ENCODE measurements at regions of chr16 and their contacts with region 1.

Region 1: GRCh38 chr16:88700636-88701482 is 5.3 kb downstream of the RNF166 start:
- DNase-seq: peak; percentile 98
- H3K4me3 Mint-ChIP-seq: peak overlapping the region; percentile 95
- H3K27ac Mint-ChIP-seq: peak overlapping the region; percentile 98
- H3K4me1 Mint-ChIP-seq: peaks cover 63% of the 10 kb centered on the region
- H3K27me3 Mint-ChIP-seq: no peaks in the 10 kb centered on the region

Region 2: GRCh38 chr16:88619859-88620815 is 80.7 kb before region 1 on chr16:
- CTCF ChIA-PET with region 1: interaction called, 6 read pairs
- POLR2A ChIA-PET with region 1: interaction called, 17 read pairs
- DNase-seq: peak; percentile 86
- H3K4me3 Mint-ChIP-seq: peak overlapping the region; percentile 55
- H3K27ac Mint-ChIP-seq: peak overlapping the region; percentile 93
- H3K4me1 Mint-ChIP-seq: peaks cover 57% of the 10 kb centered on the region
- H3K27me3 Mint-ChIP-seq: no peaks in the 10 kb centered on the region

Region 3: GRCh38 chr16:88633684-88634140 is 67.1 kb before region 1 on chr16:
- CTCF ChIA-PET with region 1: no interaction called
- POLR2A ChIA-PET with region 1: interaction called, 19 read pairs
- DNase-seq: peak; percentile 71
- H3K4me3 Mint-ChIP-seq: peak overlapping the region; percentile 76
- H3K27ac Mint-ChIP-seq: peak overlapping the region; percentile 62
- H3K4me1 Mint-ChIP-seq: peaks cover 46% of the 10 kb centered on the region
- H3K27me3 Mint-ChIP-seq: peaks cover 20% of the 10 kb centered on the region

Region 4: GRCh38 chr16:88639231-88640038 is 61.4 kb before region 1 on chr16:
- CTCF ChIA-PET with region 1: no interaction called
- POLR2A ChIA-PET with region 1: interaction called, 19 read pairs
- DNase-seq: no peak
- H3K4me3 Mint-ChIP-seq: no peak overlapping the region
- H3K27ac Mint-ChIP-seq: no peak overlapping the region
- H3K4me1 Mint-ChIP-seq: peaks cover 44% of the 10 kb centered on the region
- H3K27me3 Mint-ChIP-seq: peaks cover 35% of the 10 kb centered on the region

Region 5: GRCh38 chr16:88662843-88663606 is 37.8 kb before region 1 on chr16 and contains the start of gene MVD:
- CTCF ChIA-PET with region 1: no interaction called
- POLR2A ChIA-PET with region 1: interaction called, 18 read pairs
- DNase-seq: peak; percentile 97
- H3K4me3 Mint-ChIP-seq: peak within 1 kb of the TSS; percentile 91
- H3K27ac Mint-ChIP-seq: peak within 1 kb of the TSS; percentile 86
- H3K4me1 Mint-ChIP-seq: peaks cover 25% of the 10 kb centered on the region
- H3K27me3 Mint-ChIP-seq: no peaks in the 10 kb centered on the region
- total RNA-seq, gene MVD: 134 to 139 TPM

Region 6: GRCh38 chr16:88686439-88687253 is 14.2 kb before region 1 on chr16 and contains the start of gene SNAI3:
- CTCF ChIA-PET with region 1: interaction called, 26 read pairs
- POLR2A ChIA-PET with region 1: interaction called, 77 read pairs
- DNase-seq: peak; percentile 90
- H3K4me3 Mint-ChIP-seq: peak within 1 kb of the TSS; percentile 76
- H3K27ac Mint-ChIP-seq: peak within 1 kb of the TSS; percentile 44
- H3K4me1 Mint-ChIP-seq: peaks cover 59% of the 10 kb centered on the region
- H3K27me3 Mint-ChIP-seq: no peaks in the 10 kb centered on the region
- total RNA-seq, gene SNAI3: 16.5 to 16.6 TPM

Region 7: DNA sequence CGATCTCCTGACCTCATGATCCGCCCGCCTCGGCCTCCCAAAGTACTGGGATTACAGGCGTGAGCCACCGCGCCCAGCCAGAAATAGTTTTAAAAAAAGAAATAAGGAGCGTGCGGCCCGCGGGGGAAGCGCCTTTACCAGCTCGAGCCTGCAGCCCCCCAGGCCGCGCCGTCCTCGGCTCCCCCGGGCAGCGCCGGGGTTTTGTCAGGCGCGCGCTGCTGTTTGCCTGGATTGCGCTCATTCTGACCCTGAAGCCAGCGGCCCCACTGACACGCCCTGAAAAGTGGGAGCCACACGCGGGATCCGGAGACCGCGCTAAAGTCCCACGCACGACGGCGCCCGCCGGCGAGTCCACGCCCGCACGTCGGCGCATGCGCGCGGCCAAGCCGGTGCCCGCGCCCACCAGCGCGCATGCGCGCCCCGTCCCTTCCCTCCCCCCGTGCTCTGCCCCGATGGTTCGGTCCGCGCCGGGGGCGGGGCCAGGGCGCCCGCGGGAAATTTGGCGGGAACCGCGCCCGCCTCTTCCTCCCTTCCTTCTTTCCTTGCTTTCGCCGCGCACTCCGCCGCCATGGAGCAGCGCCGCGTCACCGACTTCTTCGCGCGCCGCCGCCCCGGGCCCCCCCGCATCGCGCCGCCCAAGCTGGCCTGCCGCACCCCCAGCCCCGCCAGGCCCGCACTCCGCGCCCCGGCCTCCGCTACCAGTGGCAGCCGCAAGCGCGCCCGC is 102.6 kb after region 1 on chr16 and contains the start of gene CDT1:
- CTCF ChIA-PET with region 1: interaction called, 4 read pairs
- POLR2A ChIA-PET with region 1: interaction called, 15 read pairs
- DNase-seq: peak; percentile 88
- H3K4me3 Mint-ChIP-seq: peak within 1 kb of the TSS; percentile 86
- H3K27ac Mint-ChIP-seq: peak within 1 kb of the TSS; percentile 93
- H3K4me1 Mint-ChIP-seq: peaks cover 35% of the 10 kb centered on the region
- H3K27me3 Mint-ChIP-seq: no peaks in the 10 kb centered on the region
- total RNA-seq, gene CDT1: 133 to 137 TPM

Region 8: GRCh38 chr16:88831838-88832237 is 131.0 kb after region 1 on chr16:
- CTCF ChIA-PET with region 1: no interaction called
- POLR2A ChIA-PET with region 1: no interaction called
- DNase-seq: no peak
- H3K4me3 Mint-ChIP-seq: no peak overlapping the region
- H3K27ac Mint-ChIP-seq: no peak overlapping the region
- H3K4me1 Mint-ChIP-seq: no peaks in the 10 kb centered on the region
- H3K27me3 Mint-ChIP-seq: no peaks in the 10 kb centered on the region

Measured in activated CD4-positive, alpha-beta memory T cell treated with anti-CD3 and anti-CD28 coated beads, Interleukin-2, amount 10 ng/mL, durations not matched to agents 7 days and 5 days (primary cell).